PC-9 (cell line): ENCODE measurements at regions of chr4 and their contacts with region 1.

Region 1: GRCh38 chr4:88823058-88823919 is 125.7 kb upstream of the NAP1L5 start:
- DNase-seq: peak; percentile 79 to 84
- H3K4me3 ChIP-seq: peak overlapping the region; percentile 70
- H3K27ac ChIP-seq: peak overlapping the region; percentile 92
- H3K4me1 ChIP-seq: peaks cover 31% of the 10 kb centered on the region
- H3K27me3 ChIP-seq: no peaks in the 10 kb centered on the region
- CTCF ChIP-seq: no peak

Region 2: GRCh38 chr4:88523325-88524129 is 299.8 kb before region 1 on chr4 and contains the start of gene PYURF:
- CTCF ChIA-PET with region 1: no interaction called
- POLR2A ChIA-PET with region 1: interaction called, 3 read pairs
- intact Hi-C with region 1: loop called (anchors 5 kb)
- DNase-seq: peak; percentile 80 to 87
- H3K4me3 ChIP-seq: peak within 1 kb of the TSS; percentile 85
- H3K27ac ChIP-seq: peak within 1 kb of the TSS; percentile 73
- H3K4me1 ChIP-seq: peaks cover 26% of the 10 kb centered on the region
- H3K27me3 ChIP-seq: no peaks in the 10 kb centered on the region
- CTCF ChIP-seq: no peak
- total RNA-seq, gene PYURF: 53.3 and 55.0 TPM in 2 replicates

Region 3: GRCh38 chr4:88533937-88534750 is 289.1 kb before region 1 on chr4:
- CTCF ChIA-PET with region 1: no interaction called
- POLR2A ChIA-PET with region 1: no interaction called
- intact Hi-C with region 1: loop called (anchors 5 kb)
- DNase-seq: peak in 1 of 2 experiments; percentile 55
- H3K4me3 ChIP-seq: no peak overlapping the region
- H3K27ac ChIP-seq: 0 out of 2 replicates have a peak overlapping the region, but pooled peaks have one; percentile 30
- H3K4me1 ChIP-seq: peaks cover 3% of the 10 kb centered on the region; the same call in 1 of the 2 replicates
- H3K27me3 ChIP-seq: no peaks in the 10 kb centered on the region
- CTCF ChIP-seq: no peak

Region 4: DNA sequence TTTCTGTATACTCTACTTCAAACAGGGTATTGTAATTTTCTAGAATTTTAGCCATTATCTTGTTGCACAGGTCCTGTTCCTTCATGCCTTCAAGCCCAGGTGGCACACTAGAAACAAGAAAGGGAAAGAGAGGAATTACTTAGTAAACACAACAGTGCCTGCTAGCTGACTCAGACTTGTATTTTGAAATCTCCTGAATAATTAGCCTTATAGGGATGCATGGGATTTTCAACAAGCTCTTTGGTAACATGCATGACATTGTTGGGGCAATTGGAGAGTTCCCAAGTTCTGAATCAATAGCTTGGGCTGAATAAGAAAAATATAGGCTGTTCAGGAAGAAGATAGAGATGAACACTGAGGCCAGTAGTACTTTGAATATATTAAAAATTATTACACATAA is 114.8 kb after region 1 on chr4:
- CTCF ChIA-PET with region 1: no interaction called
- POLR2A ChIA-PET with region 1: no interaction called
- intact Hi-C with region 1: loop called (anchors 2 kb)
- DNase-seq: peak; percentile 7 to 87
- H3K4me3 ChIP-seq: no peak overlapping the region
- H3K27ac ChIP-seq: peak overlapping the region; percentile 52
- H3K4me1 ChIP-seq: peaks cover 23% of the 10 kb centered on the region
- H3K27me3 ChIP-seq: no peaks in the 10 kb centered on the region
- CTCF ChIP-seq: no peak

Region 5: DNA sequence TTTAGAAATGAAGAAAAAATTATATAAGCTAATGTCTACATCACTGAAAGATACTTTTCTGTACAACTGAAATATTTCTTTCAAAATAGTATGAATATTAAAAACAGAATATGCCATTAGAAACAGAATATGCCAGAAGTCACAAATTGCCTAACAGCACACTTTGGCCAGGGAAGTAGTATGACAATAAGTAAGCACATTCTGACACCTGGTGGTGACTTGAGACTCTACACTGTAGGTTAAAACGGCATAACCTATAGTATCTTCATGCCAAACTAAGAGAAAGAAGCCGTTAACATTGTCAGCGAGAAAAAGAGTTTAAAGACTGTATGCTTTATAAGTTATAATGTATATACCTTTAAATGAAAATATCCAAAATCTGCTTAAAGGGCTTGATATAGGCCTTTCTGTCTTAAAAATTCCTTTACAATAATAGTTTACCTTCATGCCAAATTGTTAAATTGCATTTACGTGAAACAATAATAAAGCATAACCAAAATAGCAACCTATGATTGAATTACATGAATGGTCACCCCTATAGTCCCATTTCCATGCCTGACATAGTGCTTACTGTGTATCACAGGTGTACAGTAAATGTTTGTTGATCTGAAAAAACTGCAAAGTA is 200.9 kb after region 1 on chr4:
- CTCF ChIA-PET with region 1: interaction called, 3 read pairs
- POLR2A ChIA-PET with region 1: interaction called, 4 read pairs
- intact Hi-C with region 1: loop called (anchors 1 kb)
- DNase-seq: peak; percentile 15 to 60
- H3K4me3 ChIP-seq: no peak overlapping the region
- H3K27ac ChIP-seq: no peak overlapping the region
- H3K4me1 ChIP-seq: 0 out of 2 replicates have a peak, but pooled peaks cover 5% of the 10 kb centered on the region
- H3K27me3 ChIP-seq: no peaks in the 10 kb centered on the region
- CTCF ChIP-seq: peak; percentile 81

Region 6: GRCh38 chr4:90152024-90152423 is 1328.7 kb after region 1 on chr4:
- CTCF ChIA-PET with region 1: no interaction called
- POLR2A ChIA-PET with region 1: no interaction called
- intact Hi-C with region 1: no loop called
- DNase-seq: no peak
- H3K4me3 ChIP-seq: no peak overlapping the region
- H3K27ac ChIP-seq: no peak overlapping the region
- H3K4me1 ChIP-seq: no peaks in the 10 kb centered on the region
- H3K27me3 ChIP-seq: no peaks in the 10 kb centered on the region
- CTCF ChIP-seq: no peak